K562 (cell line): ENCODE measurements at regions of chr6 and their contacts with region 1.

Region 1: GRCh38 chr6:31366693-31367470 is 9.9 kb upstream of the HLA-B start:
- DNase-seq: peak; percentile 88 to 95 (median 90)
- ATAC-seq: peak; percentile 100
- H3K4me3 ChIP-seq: no peak overlapping the region
- H3K27ac ChIP-seq: no peak overlapping the region
- H3K4me1 ChIP-seq: no peaks in the 10 kb centered on the region
- H3K27me3 ChIP-seq: peaks cover 15 to 28% of the 10 kb centered on the region in 2 experiments
- CTCF ChIP-seq: peak; percentile 96 to 98 (median 97)
- EP300 ChIP-seq: no peak
- POLR2A ChIP-seq: no peak
- RAD21 ChIP-seq: peak; percentile 97 to 99

Region 2: DNA sequence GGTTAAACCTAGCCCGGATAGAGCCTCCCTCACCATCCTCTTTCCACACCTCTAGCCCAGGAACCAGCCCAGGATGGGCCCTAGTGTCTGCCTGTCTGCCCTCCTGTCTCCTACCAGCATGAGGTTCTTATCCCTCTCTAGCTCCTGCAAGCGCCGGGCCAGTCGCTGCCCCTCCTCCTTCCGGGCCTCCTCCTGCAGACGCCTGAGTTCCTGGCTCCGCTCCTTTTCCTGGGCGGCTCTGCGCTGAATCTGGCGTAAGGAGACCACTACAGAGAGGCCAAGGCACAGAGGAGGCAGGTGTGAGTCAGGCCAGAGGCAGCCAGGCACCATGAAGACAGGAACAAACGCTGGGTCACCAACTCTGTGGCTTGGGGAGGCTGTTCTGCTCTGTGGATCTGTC is 223.7 kb before region 1 on chr6:
- CTCF ChIA-PET with region 1: interaction called, 12 read pairs
- POLR2A ChIA-PET with region 1: no interaction called
- in situ Hi-C with region 1: loop called (anchors 5 kb)
- intact Hi-C with region 1: no loop called
- DNase-seq: no peak
- ATAC-seq: no peak
- H3K4me3 ChIP-seq: no peak overlapping the region
- H3K27ac ChIP-seq: no peak overlapping the region
- H3K4me1 ChIP-seq: peaks cover 0 to 5% of the 10 kb centered on the region in 2 experiments; a peak in 3 of 5 replicates
- H3K27me3 ChIP-seq: no peaks in the 10 kb centered on the region; a peak in 1 of 5 replicates
- CTCF ChIP-seq: no peak
- EP300 ChIP-seq: no peak
- POLR2A ChIP-seq: no peak
- RAD21 ChIP-seq: no peak

Region 3: DNA sequence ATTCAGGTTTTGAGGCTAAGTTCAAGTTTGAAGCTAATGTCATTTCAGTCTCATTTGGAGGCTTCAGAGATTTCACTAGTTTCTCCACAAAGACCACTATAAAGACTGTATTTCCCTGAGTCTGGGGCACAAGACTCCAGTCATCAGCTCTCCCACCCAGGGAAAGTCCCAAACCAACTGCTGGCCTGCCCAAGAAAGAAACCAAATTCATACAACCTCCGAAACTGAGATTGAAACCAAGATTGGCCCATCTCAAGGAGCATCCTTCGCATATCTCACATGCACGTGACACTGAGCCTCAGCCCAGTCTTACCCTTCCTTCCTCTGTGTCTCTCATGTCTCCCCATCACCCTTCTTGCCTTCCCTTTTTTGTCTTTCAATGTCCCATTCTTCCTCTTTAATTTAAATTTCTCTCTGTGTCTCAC is 201.7 kb after region 1 on chr6:
- CTCF ChIA-PET with region 1: no interaction called
- POLR2A ChIA-PET with region 1: no interaction called
- in situ Hi-C with region 1: no loop called
- intact Hi-C with region 1: no loop called
- DNase-seq: no peak
- ATAC-seq: no peak
- H3K4me3 ChIP-seq: no peak overlapping the region
- H3K27ac ChIP-seq: no peak overlapping the region
- H3K4me1 ChIP-seq: peaks cover 5 to 18% of the 10 kb centered on the region in 2 experiments; a peak in 4 of 5 replicates
- H3K27me3 ChIP-seq: no peaks in the 10 kb centered on the region
- CTCF ChIP-seq: no peak
- EP300 ChIP-seq: no peak
- POLR2A ChIP-seq: no peak
- RAD21 ChIP-seq: no peak